Activated naive CD4-positive, alpha-beta T cell treated with anti-CD3 and anti-CD28 coated beads for 36 hours (primary cell): ENCODE measurements at regions of chrX and their contacts with region 1.

Region 1: GRCh38 chrX:139559383-139560042 is 29.0 kb downstream of the F9 start:
- DNase-seq: peak; percentile 31
- H3K4me3 Mint-ChIP-seq: no peak overlapping the region
- H3K27ac Mint-ChIP-seq: no peak overlapping the region
- H3K4me1 Mint-ChIP-seq: peaks cover 3% of the 10 kb centered on the region
- H3K27me3 Mint-ChIP-seq: peaks cover 2% of the 10 kb centered on the region

Region 2: GRCh38 chrX:139126493-139126892 is 433.0 kb before region 1 on chrX:
- CTCF ChIA-PET with region 1: no interaction called
- intact Hi-C with region 1: loop called (anchors 1 kb)
- DNase-seq: peak; percentile 15
- H3K4me3 Mint-ChIP-seq: no peak overlapping the region
- H3K27ac Mint-ChIP-seq: no peak overlapping the region
- H3K4me1 Mint-ChIP-seq: no peaks in the 10 kb centered on the region
- H3K27me3 Mint-ChIP-seq: no peaks in the 10 kb centered on the region